ENCODE measurements at regions of chr17 and their contacts with region 1.

Region 1: DNA sequence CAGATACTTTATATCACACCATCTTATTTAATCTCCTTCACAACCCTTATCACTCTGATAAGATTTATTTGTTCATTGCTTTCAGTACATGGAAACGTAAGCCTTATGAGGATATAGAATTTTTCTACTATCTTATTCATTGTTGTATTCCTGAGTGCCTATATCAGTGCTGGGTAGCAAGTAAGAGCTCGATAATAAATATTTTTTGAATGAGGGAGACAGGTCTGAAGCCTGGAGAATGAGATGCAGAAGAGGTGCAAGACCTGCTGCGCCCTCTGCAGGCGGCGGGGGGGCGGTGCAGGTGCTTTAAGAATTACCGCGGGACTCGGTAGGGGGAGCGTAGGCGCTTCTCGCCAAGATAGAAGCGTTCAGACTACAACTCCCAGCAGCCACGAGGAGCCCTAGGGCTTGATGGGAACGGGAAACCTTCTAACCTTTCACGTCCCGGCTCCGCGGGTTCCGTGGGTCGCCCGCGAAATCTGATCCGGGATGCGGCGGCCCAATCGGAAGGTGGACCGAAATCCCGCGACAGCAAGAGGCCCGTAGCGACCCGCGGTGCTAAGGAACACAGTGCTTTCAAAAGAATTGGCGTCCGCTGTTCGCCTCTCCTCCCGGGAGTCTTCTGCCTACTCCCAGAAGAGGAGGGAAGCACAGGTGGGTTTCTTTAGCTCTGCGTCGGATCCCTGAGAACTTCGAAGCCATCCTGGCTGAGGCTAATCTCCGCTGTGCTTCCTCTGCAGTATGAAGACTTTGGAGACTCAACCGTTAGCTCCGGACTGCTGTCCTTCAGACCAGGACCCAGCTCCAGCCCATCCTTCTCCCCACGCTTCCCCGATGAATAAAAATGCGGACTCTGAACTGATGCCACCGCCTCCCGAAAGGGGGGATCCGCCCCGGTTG is at the start of gene WRAP53:
- DNase-seq: peak; percentile 97
- ATAC-seq: peak; percentile 85
- H3K4me3 Mint-ChIP-seq: peak within 1 kb of the TSS; percentile 98
- H3K27ac Mint-ChIP-seq: peak within 1 kb of the TSS; percentile 100
- H3K4me1 Mint-ChIP-seq: peaks cover 40% of the 10 kb centered on the region
- H3K27me3 Mint-ChIP-seq: no peaks in the 10 kb centered on the region
- total RNA-seq, gene WRAP53: 27.1 to 29.3 TPM

Region 2: GRCh38 chr17:7045909-7046724 is 642.0 kb before region 1 on chr17:
- CTCF ChIA-PET with region 1: interaction called, 10 read pairs
- POLR2A ChIA-PET with region 1: no interaction called
- DNase-seq: peak; percentile 68
- ATAC-seq: peak; percentile 43
- H3K4me3 Mint-ChIP-seq: peak overlapping the region; percentile 73
- H3K27ac Mint-ChIP-seq: peak overlapping the region; percentile 66
- H3K4me1 Mint-ChIP-seq: peaks cover 37% of the 10 kb centered on the region
- H3K27me3 Mint-ChIP-seq: peaks cover 10% of the 10 kb centered on the region

Region 3: DNA sequence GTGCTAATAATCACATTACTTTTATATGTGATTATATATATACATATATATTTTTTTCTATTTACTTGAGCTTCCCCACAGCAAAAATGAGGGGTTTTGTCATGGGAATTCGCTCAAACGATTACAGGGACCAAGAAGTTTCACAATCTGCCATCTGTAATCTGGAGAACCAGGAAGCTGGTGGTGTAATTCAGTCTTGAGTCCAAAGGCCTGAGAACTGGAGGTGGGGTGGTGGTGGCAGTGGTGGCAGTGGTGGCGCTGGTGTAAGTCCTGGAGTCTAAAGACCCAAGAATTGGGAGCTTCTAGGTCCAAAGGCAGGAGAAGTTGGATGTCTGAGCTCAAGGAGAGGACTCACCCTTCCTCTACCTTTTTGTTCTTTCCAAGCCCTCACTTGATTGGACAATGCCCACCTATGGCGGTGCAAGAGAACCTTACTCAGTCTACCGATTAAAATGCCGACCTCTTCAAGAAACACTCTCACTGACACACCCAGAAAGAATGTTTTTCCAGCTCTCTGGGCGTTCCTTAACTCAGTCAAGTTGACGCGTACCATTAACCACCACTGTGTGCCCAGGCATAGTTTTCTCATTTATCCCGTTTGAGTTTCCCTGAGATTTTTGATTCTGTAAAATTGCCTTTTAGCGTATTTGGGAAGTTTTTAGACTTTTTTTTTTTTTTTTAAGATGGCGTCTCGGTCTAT is 172.1 kb before region 1 on chr17:
- CTCF ChIA-PET with region 1: interaction called, 14 read pairs
- POLR2A ChIA-PET with region 1: no interaction called
- DNase-seq: no peak
- ATAC-seq: no peak
- H3K4me3 Mint-ChIP-seq: no peak overlapping the region
- H3K27ac Mint-ChIP-seq: no peak overlapping the region
- H3K4me1 Mint-ChIP-seq: peaks cover 4% of the 10 kb centered on the region
- H3K27me3 Mint-ChIP-seq: no peaks in the 10 kb centered on the region

Region 4: DNA sequence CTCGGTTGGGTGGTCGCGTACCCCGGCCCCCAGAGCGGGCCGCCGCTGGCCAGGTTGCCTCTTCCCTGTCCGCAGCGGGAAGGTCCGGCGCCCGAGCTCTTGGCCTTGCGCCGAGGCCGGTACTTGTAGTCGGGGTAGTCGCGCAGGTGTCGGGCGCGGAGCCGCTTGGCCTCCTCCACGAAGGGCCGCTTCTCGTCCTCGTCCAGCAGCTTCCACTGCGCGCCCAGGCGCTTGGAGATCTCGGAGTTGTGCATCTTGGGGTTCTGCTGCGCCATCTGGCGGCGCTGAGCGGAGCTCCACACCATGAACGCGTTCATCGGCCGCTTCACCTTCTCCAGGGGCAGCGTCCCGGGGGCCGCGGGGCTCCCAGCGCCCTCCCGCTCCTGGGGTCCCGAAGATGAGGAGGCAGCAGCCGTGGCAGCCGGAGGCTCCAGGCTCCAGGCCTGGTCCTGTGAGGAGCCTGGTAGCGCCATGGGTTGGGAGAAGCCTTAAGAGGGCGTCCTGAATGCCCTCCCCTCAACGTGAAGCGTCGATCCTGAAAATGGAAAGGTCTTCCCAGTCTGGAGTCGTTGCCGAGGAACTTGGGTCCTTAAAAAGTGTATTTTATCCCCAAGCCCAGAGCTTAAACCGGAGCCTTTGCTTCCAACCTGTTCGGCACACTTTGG is 98.8 kb before region 1 on chr17:
- CTCF ChIA-PET with region 1: interaction called, 45 read pairs
- POLR2A ChIA-PET with region 1: interaction called, 82 read pairs
- DNase-seq: peak; percentile 74
- ATAC-seq: peak; percentile 75
- H3K4me3 Mint-ChIP-seq: no peak overlapping the region
- H3K27ac Mint-ChIP-seq: no peak overlapping the region
- H3K4me1 Mint-ChIP-seq: peaks cover 20% of the 10 kb centered on the region
- H3K27me3 Mint-ChIP-seq: no peaks in the 10 kb centered on the region

Region 5: DNA sequence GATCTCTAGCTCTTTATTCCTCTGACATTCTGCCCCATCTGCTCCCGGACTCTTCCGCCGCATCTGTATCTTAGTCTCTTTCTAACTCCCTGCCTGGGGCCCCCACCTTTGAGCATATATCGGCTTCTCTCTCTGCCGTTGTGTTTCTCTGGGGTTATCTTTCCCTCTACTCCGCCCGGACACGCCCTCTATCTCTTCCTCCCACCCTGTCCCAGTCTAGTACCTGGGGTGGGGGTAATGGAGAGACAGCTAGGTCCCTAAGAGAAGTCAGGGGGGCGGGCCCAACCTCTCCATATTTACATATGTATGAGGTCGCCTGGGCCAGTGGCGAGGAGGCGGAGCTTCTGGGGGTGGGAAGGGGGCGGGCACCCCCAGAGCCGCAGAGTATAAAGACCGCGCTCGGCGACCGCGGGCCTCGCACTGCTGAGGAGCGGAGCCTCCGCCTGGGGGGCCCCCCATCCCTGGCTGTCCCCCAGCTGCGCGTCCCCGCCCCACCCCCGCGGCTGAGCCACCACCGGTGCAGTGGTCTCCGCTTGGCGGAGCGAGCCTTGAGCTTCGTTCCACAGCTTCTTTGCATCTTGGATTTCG is 37.6 kb before region 1 on chr17 and contains the start of gene ATP1B2:
- CTCF ChIA-PET with region 1: interaction called, 6 read pairs
- POLR2A ChIA-PET with region 1: interaction called, 23 read pairs
- DNase-seq: peak; percentile 77
- ATAC-seq: peak; percentile 88
- H3K4me3 Mint-ChIP-seq: peak within 1 kb of the TSS; percentile 66
- H3K27ac Mint-ChIP-seq: no peak within 1 kb of the TSS
- H3K4me1 Mint-ChIP-seq: peaks cover 12% of the 10 kb centered on the region
- H3K27me3 Mint-ChIP-seq: peaks cover 52% of the 10 kb centered on the region
- total RNA-seq, gene ATP1B2: not detected

Region 6: DNA sequence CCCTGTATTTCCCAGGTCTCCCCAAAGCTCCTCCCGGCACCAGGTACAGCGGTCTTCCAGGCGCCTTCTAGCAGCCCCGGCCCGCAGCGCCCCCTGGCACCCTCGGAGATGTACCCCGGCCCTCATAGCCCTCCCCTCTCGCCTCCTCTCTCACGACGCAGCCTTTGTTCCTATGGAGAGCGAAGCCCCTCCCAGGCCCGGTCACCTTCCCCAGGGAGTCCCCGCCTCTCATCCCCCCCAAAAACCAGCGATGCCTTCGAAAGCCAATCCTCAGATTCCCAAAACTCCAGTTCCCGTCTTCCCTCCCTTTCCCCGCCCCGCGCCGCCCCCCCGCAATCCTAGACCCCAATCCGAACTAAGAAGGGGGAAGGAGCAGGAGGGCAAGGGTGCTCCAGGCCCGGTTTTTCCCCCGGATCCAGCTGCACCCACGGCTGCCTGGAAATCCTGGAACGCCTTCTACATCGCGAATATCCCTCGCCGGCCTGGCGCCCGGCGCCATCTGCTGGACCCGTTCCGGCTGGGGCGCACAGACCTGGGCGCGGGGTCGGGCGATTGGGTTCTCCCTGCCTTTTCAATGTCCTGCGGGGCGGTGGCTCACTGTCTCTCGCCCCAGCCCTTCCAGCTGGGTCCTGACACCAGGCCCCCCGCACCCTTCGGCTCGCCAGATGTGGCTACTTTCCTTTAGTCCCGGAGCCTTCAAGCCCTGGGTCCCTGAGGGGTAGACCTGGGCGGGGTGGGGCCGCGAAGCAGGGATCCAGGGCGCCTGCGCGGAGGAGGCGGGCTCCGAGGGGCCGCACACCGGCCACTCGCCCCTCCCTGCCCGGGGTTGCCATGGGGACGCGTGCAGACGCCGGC is 29.0 kb after region 1 on chr17 and contains the start of gene DNAH2:
- CTCF ChIA-PET with region 1: interaction called, 25 read pairs
- POLR2A ChIA-PET with region 1: interaction called, 8 read pairs
- DNase-seq: peak; percentile 76
- ATAC-seq: peak; percentile 83
- H3K4me3 Mint-ChIP-seq: peak within 1 kb of the TSS; percentile 82
- H3K27ac Mint-ChIP-seq: peak within 1 kb of the TSS; percentile 62
- H3K4me1 Mint-ChIP-seq: peaks cover 44% of the 10 kb centered on the region
- H3K27me3 Mint-ChIP-seq: peaks cover 61% of the 10 kb centered on the region
- total RNA-seq, gene DNAH2: not detected

Region 7: DNA sequence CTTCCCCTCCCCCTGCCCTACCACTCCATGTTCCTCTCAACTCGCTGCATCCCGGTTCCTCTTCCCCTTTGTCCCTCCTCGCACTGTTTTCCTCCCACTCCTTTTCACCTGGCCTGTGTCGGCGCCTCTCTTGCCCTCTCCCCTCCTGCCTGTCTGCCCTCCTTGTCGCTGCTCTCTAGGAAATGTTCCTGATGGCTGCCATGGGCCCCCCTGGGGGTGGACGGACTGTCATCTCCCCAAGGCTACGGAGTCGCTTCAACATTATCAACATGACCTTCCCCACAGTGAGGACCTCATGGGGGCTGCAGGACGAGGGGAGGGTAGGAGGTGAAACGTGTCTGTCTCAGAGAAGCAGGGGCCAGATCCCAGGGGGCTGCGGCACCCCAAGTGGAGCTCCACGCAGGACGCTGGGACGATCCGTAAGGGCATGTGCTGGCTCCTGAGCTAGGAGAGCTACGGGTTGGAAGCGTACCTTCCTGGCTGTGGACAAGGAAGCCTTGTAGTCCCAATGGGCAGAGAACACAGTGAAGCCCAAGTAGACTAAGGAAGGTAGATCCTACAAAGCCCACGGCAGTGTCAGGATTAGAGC is 106.0 kb after region 1 on chr17:
- CTCF ChIA-PET with region 1: no interaction called
- POLR2A ChIA-PET with region 1: no interaction called
- DNase-seq: no peak
- ATAC-seq: no peak
- H3K4me3 Mint-ChIP-seq: no peak overlapping the region
- H3K27ac Mint-ChIP-seq: no peak overlapping the region
- H3K4me1 Mint-ChIP-seq: no peaks in the 10 kb centered on the region
- H3K27me3 Mint-ChIP-seq: no peaks in the 10 kb centered on the region